Lower leg skin (tissue), 4 donors: ENCODE measurements at regions of chr6 and their contacts with region 1.

Region 1: GRCh38 chr6:35893246-35893645 is 27.7 kb downstream of the SRPK1 start:
- DNase-seq: no peak
- H3K4me3 ChIP-seq: no peak overlapping the region
- CTCF ChIP-seq: no peak
- POLR2A ChIP-seq: no peak

Region 2: DNA sequence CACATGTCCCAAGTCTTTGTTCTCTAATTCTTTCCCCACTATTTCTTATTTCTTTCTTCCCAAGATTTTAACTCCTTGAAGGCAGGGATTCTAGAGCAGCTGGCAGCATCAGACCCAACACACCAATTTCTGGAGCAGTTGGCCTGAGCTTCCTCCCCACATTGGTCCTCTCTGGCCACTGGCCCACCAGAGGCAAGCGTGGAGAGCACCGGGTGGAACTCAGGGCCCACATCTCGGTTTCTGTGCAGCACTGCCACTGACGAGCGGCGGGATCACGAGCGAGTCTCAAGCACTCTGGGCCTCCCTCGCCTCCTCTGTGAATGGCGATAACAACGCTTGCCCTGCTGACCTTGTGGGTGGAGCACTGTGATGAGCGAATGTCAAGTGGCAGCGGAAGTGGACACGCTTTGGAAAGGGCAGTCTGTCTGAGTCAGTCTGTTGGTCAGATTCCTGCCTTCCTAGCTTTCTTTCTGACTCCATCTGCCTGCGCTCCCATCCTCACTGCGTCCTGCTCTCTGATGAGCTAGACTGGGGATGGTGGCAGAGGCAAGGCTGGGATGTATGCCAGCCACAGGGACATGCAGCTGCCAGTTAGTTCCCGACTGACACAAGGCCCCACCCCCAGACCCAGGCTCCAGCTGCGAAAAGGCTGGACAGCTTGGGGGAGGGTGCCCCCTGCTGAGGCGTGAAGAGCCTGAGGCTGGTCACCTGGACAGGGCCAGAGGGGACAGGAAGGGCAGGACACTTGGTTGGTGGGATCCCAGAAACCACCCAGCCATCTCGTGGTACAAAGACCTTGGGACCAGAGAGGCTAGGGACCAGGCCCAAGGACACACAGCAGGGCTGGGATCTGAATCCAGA is 1332.7 kb before region 1 on chr6:
- intact Hi-C with region 1: no loop called
- DNase-seq: no peak
- H3K4me3 ChIP-seq: no peak overlapping the region
- CTCF ChIP-seq: no peak
- POLR2A ChIP-seq: no peak

Region 3: GRCh38 chr6:35014801-35015200 is 878.4 kb before region 1 on chr6:
- intact Hi-C with region 1: loop called (anchors 5 kb)
- DNase-seq: no peak
- H3K4me3 ChIP-seq: no peak overlapping the region
- CTCF ChIP-seq: no peak
- POLR2A ChIP-seq: no peak